CD4-positive, alpha-beta T cell (primary cell): ENCODE measurements at regions of chr3 and their contacts with region 1.

Region 1: GRCh38 chr3:39107388-39108199 is at the starts of genes GORASP1 and TTC21A:
- DNase-seq: peak in 13 of 14 experiments; percentile 33 to 84 (median 62)
- ATAC-seq: peak; percentile 71
- H3K4me3 ChIP-seq: peak within 1 kb of the TSS; percentile 96
- H3K4me3 Mint-ChIP-seq: peak within 1 kb of the TSS; percentile 97
- H3K27ac ChIP-seq: peak within 1 kb of the TSS; percentile 56 to 57
- H3K27ac Mint-ChIP-seq: peak within 1 kb of the TSS; percentile 81
- H3K4me1 ChIP-seq: peaks cover 54% of the 10 kb centered on the region
- H3K4me1 Mint-ChIP-seq: peaks cover 50% of the 10 kb centered on the region
- H3K27me3 ChIP-seq: no peaks in the 10 kb centered on the region
- H3K27me3 Mint-ChIP-seq: no peaks in the 10 kb centered on the region
- CTCF ChIP-seq: no peak
- total RNA-seq, gene GORASP1: 29.1 to 31.5 TPM
- total RNA-seq, gene TTC21A: 4.1 to 5.2 TPM

Region 2: DNA sequence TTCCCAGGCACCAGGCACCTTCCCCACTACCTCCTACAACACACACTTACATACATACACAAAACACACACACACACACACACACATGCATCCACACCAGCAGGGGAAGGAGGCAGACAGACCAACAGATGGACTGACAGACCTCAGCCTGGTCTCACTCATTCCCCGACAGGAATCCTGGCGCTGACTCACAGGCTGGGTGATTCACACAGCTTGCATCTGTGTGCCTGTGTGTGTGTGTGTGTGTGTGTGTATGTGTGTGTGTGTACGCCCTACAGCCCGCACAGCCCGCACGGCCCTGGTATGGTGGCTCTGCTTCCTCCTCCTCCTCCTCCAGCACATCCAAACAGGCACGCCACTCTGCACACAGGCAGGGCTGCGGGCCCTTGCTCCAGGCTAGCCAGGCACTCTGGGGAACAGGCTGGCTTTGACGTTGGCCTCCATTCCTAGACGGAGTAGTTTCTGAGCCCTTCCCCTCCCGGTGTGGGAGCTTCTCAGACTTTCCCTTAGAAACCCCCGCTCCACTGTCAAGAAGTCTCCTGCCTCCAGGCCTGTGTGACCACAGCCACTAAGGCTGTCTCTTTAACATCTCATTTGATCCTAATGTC is 39.5 kb after region 1 on chr3:
- CTCF ChIA-PET with region 1: no interaction called
- POLR2A ChIA-PET with region 1: interaction called, 10 read pairs
- intact Hi-C with region 1: no loop called
- DNase-seq: peak in 13 of 14 experiments; percentile 48 to 89 (median 71)
- ATAC-seq: peak; percentile 27
- H3K4me3 ChIP-seq: peak overlapping the region; percentile 44
- H3K4me3 Mint-ChIP-seq: peak overlapping the region; percentile 93
- H3K27ac ChIP-seq: peak overlapping the region; percentile 64 to 83
- H3K27ac Mint-ChIP-seq: peak overlapping the region; percentile 97
- H3K4me1 ChIP-seq: peaks cover 77% of the 10 kb centered on the region
- H3K4me1 Mint-ChIP-seq: peaks cover 83% of the 10 kb centered on the region
- H3K27me3 ChIP-seq: no peaks in the 10 kb centered on the region
- H3K27me3 Mint-ChIP-seq: no peaks in the 10 kb centered on the region
- CTCF ChIP-seq: no peak

Region 3: DNA sequence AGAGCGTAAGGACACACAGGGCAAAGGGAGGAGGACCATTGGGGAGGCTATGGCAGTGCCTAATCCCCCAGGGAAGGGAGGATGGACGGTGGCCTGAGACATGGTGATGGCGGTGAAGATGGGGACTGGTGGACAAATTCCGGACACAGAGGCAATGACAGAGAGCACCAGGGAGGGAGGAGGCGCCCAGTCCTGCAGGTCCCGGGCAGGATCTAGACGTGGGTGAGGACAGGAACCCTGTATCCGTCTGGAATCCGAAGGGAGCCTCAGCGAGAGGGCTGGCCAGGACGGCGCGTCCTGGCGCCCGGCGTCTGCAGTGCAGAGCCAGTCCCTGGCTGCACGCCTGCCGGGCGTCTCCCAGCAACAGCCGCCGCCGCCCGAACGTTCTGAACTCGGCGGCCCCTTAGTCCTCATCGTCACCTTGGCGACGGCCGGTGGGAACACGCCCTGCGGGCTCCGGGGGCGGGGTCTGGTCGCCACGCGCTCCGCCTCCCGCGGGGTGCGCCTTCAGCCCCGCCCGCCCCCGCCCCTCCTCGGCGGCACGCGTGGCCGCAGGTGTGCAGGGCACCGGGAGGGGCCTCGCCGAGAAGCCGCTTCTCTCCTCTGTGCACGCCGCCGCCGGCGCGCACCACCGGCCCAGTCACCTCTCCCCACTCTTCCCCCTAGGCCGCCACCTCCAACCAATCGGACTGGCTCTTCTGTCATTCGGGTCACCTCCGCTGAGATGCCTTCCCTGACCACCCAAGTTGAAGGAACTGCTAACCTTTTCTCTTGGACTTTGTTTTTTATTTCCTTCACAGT is 73.2 kb after region 1 on chr3:
- CTCF ChIA-PET with region 1: no interaction called
- POLR2A ChIA-PET with region 1: interaction called, 4 read pairs
- intact Hi-C with region 1: loop called in 1 of 2 experiments (anchors 2 kb)
- DNase-seq: peak; percentile 82 to 96 (median 88)
- ATAC-seq: peak; percentile 88
- H3K4me3 ChIP-seq: peak overlapping the region; percentile 53
- H3K4me3 Mint-ChIP-seq: peak overlapping the region; percentile 82
- H3K27ac ChIP-seq: peak overlapping the region; percentile 47 to 48
- H3K27ac Mint-ChIP-seq: peak overlapping the region; percentile 71
- H3K4me1 ChIP-seq: peaks cover 40% of the 10 kb centered on the region
- H3K4me1 Mint-ChIP-seq: peaks cover 28% of the 10 kb centered on the region
- H3K27me3 ChIP-seq: no peaks in the 10 kb centered on the region
- H3K27me3 Mint-ChIP-seq: no peaks in the 10 kb centered on the region
- CTCF ChIP-seq: no peak

Region 4: DNA sequence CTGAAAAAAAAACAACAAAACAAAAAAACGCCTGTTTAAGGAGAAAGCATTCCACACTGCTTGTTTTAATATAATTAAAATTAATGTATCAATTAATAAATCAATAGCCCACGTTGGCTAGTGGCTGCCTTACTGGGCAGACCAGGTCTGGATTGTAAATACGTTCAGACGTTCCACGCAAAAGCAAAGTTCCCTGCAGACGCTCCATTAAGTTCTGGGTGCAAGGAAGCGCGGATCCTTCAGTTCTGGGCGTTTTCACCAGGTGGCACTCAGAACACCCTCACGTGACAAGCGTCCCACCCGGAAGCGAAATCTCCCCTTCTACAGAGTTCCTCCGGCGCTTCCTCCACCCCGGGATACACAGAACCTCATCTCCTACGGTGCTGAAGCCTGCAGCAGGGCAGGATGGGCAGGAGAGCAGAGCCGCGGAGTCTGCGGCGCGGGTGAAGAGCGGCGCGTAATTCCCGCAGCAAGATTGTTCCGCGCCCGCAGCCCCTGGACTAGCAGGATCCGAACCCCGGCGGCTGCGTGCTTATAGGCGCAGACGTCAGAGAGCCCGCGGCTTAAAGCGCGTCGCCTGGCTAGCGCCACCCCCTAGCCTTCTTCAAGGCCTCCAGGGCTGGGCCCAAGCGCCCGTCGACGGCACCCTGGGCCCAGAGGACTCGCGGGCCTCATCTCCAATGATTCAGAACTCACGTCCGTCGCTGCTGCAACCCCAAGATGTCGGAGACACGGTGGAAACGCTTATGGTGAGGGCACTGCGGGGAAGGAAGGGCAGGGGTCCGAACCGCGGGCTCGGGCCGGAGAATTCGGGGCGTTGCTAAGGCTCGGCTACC is 275.7 kb after region 1 on chr3 and contains the start of gene SLC25A38:
- CTCF ChIA-PET with region 1: no interaction called
- POLR2A ChIA-PET with region 1: no interaction called
- intact Hi-C with region 1: loop called (anchors 5 kb)
- DNase-seq: peak; percentile 58 to 94 (median 75)
- ATAC-seq: peak; percentile 82
- H3K4me3 ChIP-seq: peak within 1 kb of the TSS; percentile 95
- H3K4me3 Mint-ChIP-seq: peak within 1 kb of the TSS; percentile 94
- H3K27ac ChIP-seq: peak within 1 kb of the TSS; percentile 93 to 97
- H3K27ac Mint-ChIP-seq: peak within 1 kb of the TSS; percentile 97
- H3K4me1 ChIP-seq: peaks cover 53% of the 10 kb centered on the region
- H3K4me1 Mint-ChIP-seq: peaks cover 55% of the 10 kb centered on the region
- H3K27me3 ChIP-seq: no peaks in the 10 kb centered on the region
- H3K27me3 Mint-ChIP-seq: no peaks in the 10 kb centered on the region
- CTCF ChIP-seq: peak; percentile 59
- total RNA-seq, gene SLC25A38: 43.2 to 44.7 TPM